Transverse colon (tissue), 4 donors: ENCODE measurements at regions of chr3 and their contacts with region 1.

Region 1: DNA sequence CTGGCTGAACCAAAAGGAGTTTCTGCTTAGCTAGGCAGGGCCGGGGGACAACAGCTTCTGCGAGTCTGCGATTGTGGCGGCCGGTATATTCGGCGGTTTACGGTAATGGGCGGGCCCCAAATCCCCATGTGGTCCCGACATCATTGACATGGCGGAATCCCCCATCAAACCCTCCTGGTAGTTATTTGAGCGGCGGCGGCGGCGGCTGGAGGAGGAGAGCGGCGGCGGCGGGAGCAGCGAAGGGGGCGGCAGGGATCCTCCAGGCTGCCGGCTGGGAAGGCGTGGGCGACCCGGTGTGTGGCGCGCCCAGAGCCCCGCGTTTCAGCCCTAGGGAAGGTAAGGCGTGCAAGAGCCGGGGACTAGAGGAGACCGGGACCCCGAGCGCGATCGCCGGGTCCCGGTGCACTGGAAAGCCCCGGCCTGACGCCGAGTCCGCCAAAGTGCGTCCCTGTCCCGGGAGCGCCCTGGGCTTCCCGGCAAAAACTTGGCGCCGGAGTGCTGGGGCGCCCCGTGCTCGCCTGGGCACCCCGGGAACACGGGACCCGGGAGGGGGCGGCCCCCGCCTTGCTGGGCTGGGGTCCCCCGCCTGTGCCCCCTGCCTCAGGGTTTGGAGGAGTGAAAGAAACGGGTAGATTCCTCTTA is at the start of gene FNDC3B:
- DNase-seq: peak; percentile 96
- H3K4me3 ChIP-seq: peak within 1 kb of the TSS; percentile 84 to 99 (median 88)
- H3K27ac ChIP-seq: peak within 1 kb of the TSS; percentile 97 to 99 (median 99)
- H3K4me1 ChIP-seq: peaks cover 0 to 43% (median 30%) of the 10 kb centered on the region in 4 donors
- H3K27me3 ChIP-seq: no peaks in the 10 kb centered on the region
- CTCF ChIP-seq: no peak
- EP300 ChIP-seq: no peak
- POLR2A ChIP-seq: peak; percentile 87
- total RNA-seq, gene FNDC3B: 28.5 to 85.7 (median 44.5) TPM

Region 2: GRCh38 chr3:171703756-171704401 is 335.7 kb before region 1 on chr3:
- in situ Hi-C with region 1: no loop called
- intact Hi-C with region 1: no loop called
- DNase-seq: peak; percentile 30
- H3K4me3 ChIP-seq: no peak overlapping the region
- H3K27ac ChIP-seq: no peak overlapping the region
- H3K4me1 ChIP-seq: no peaks in the 10 kb centered on the region
- H3K27me3 ChIP-seq: no peaks in the 10 kb centered on the region
- CTCF ChIP-seq: peak in 4 of 5 experiments; percentile 28 to 42 (median 40)
- EP300 ChIP-seq: no peak
- POLR2A ChIP-seq: no peak

Region 3: GRCh38 chr3:172317984-172318383 is 278.4 kb after region 1 on chr3:
- in situ Hi-C with region 1: loop called in 1 of 4 experiments (anchors 25 kb)
- intact Hi-C with region 1: no loop called
- DNase-seq: peak; percentile 24
- H3K4me3 ChIP-seq: no peak overlapping the region
- H3K27ac ChIP-seq: peak overlapping the region; percentile 65 to 82 (median 80)
- H3K4me1 ChIP-seq: peaks cover 33 to 78% (median 47%) of the 10 kb centered on the region in 4 donors
- H3K27me3 ChIP-seq: no peaks in the 10 kb centered on the region
- CTCF ChIP-seq: no peak
- EP300 ChIP-seq: peak; percentile 55
- POLR2A ChIP-seq: no peak

Region 4: DNA sequence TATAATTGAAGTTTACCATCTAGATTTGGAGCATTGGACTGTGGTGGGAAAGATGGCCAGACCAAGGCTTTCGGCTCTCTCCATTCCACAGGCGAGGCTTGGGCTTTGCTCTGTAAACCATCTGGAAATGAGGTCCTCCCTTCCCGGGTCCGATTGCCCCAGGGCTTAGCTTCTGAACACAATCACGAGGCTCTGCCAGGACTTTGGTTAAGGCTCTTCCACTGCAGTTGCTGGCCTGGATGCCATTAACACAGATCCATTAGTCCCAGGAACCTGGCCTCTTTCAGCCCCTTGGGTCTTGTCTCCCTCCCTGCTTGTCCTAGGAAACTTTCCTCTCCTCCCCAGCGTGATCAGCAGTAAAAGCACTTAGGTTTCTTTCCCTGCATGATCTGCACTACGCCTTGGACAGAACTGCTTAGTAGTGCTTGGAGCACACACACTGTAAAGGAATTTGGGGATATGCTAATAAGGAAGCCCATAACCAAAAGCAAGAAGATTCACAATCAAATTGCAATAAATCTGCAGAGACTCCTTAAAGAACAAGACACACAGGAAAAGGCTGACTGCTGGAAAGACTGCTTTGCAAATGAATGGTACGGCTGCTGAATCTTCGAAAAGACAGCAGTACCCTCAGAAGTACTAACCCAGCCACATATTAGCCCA is 865.3 kb after region 1 on chr3:
- in situ Hi-C with region 1: no loop called
- intact Hi-C with region 1: no loop called
- DNase-seq: no peak
- H3K4me3 ChIP-seq: no peak overlapping the region
- H3K27ac ChIP-seq: no peak overlapping the region
- H3K4me1 ChIP-seq: no peaks in the 10 kb centered on the region
- H3K27me3 ChIP-seq: no peaks in the 10 kb centered on the region
- CTCF ChIP-seq: no peak
- EP300 ChIP-seq: no peak
- POLR2A ChIP-seq: no peak